Heart right ventricle (tissue), 16 donors: ENCODE measurements at regions of chr1 and their contacts with region 1.

Region 1: DNA sequence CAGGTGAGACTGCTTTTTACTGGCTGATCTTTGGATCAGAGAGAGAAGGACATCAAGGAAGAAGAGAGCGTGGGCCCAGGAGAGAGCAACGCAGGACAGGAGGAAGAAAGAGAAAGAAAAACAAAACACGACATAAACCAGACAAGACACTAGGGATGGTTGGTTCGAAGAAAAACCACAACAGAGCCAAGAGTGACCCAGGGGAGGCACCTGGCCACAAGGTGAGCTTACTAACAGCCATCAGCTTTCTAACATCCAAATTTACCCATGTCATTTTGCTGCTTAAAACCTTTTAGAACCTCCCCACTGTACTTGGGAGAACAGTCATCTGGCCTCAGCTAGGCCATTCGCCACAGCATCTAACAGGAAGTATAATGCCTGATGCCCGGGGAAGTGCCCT is 57.8 kb downstream of the ARHGEF11 start:
- DNase-seq: no peak
- ATAC-seq: no peak
- H3K4me3 ChIP-seq: no peak overlapping the region
- H3K27ac ChIP-seq: no peak overlapping the region
- H3K4me1 ChIP-seq: peaks cover 0 to 9% (median 0%) of the 10 kb centered on the region in 9 donors
- H3K27me3 ChIP-seq: no peaks in the 10 kb centered on the region
- CTCF ChIP-seq: no peak

Region 2: DNA sequence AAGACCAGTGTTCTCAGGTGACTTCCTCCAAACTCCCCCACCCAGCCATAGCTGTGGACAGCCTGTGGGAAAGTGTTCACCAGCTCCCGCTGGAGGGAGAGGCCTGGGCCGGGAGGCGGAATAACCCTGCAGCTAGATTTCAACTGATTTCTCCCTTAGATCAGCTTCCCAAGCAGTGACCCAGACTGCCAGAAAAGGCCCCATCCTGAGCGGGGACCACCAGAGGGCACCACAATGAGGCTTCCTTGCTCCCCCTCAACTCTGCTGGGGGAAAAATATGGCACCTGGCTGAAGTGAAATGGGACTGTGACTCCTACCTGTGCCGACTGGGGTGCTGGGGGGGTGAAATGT is 567.9 kb before region 1 on chr1:
- intact Hi-C with region 1: loop called in 1 of 10 experiments (anchors 5 kb)
- DNase-seq: no peak
- ATAC-seq: no peak
- H3K4me3 ChIP-seq: peak overlapping the region in 3 of 10 donors; percentile 45 to 54 (median 49)
- H3K27ac ChIP-seq: no peak overlapping the region
- H3K4me1 ChIP-seq: peaks cover 9 to 29% (median 21%) of the 10 kb centered on the region in 9 donors
- H3K27me3 ChIP-seq: peaks cover 26 to 100% (median 97%) of the 10 kb centered on the region in 7 donors
- CTCF ChIP-seq: peak in 3 of 9 donors; percentile 5 to 14 (median 10)